Mammary epithelial cell (primary cell): ENCODE measurements at regions of chr9 and their contacts with region 1.

Region 1: GRCh38 chr9:37943329-37944265 is 39.7 kb upstream of the SLC25A51 start:
- DNase-seq: peak; percentile 83
- H3K4me3 ChIP-seq: no peak overlapping the region
- H3K27ac ChIP-seq: peak overlapping the region; percentile 3
- H3K4me1 ChIP-seq: peaks cover 52% of the 10 kb centered on the region
- H3K27me3 ChIP-seq: no peaks in the 10 kb centered on the region
- CTCF ChIP-seq: no peak

Region 2: DNA sequence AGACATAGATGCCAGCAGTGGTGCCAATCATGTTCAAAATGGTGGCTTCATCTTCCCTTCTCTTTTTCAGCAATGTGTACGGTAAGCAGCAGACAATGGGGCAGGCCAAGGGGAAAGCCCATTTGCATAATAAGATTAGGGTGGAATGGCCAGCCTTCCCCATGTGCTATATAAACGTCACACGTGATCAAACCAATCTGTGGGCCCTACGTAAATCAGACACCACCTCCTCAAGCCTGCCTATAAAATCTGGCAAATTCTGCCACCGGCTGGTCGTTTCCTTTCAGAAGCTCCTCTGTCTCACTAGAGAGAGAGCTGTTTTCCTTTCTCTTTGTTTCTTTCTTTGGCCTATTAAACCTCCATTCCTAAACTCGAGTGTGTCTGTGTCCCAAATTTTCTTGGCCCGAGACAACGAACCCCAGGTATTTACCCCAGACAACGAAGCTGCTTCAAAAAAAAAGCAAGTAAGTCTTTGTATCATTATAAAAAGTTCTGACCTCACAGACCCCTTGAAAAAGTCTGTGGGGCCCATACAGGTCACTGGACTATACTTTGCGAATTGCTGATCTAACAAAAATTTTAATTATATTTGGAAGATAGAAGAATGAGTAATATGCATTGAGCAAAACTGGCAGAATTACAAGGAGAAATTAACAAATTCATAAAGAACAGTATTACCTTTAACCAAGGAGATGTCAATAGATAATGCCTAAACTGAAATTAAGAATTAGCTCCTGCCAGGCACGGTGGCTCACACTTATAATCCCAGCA is 493.6 kb before region 1 on chr9:
- CTCF ChIA-PET with region 1: no interaction called
- dilution Hi-C with region 1: no loop called
- in situ Hi-C with region 1: no loop called
- intact Hi-C with region 1: no loop called
- DNase-seq: no peak
- H3K4me3 ChIP-seq: no peak overlapping the region
- H3K27ac ChIP-seq: no peak overlapping the region
- H3K4me1 ChIP-seq: peaks cover 21% of the 10 kb centered on the region
- H3K27me3 ChIP-seq: no peaks in the 10 kb centered on the region
- CTCF ChIP-seq: no peak

Region 3: DNA sequence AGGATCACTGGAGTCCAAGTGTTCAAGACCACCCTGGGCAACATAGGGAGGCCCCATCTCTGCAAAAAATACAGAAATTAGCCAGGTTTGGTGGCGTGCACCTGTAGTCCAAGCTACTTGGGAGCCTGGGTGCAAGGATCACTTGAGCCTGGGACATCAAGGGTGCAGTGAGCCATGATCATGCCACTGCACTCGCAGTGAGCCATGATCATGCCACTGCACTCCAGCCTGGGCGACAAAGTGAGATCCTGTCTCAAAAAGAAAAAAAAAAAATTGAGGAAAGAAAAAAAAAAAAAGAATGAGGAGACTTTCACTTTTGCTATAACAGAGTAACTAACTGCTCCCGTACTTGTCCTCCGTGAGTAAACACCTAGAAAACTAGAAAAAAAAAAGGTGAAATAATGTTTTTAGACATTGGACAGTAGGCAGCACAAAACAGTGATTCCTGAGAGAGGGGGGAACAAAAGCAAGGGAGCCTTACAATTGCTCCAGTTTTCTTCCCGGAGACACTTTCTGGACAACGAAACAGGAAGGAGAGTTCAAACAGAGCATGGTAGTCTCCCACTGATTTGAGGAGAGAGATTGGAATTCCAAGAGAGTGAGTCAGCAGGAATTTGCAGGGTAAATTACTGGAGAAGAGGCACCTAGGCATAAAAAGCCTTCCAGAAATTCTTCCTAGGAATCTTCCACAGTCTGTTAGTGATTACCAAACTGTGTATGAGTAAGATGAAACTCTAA is 471.5 kb before region 1 on chr9:
- CTCF ChIA-PET with region 1: no interaction called
- dilution Hi-C with region 1: loop called (anchors 10 kb)
- in situ Hi-C with region 1: no loop called
- intact Hi-C with region 1: no loop called
- DNase-seq: peak; percentile 87
- H3K4me3 ChIP-seq: peak overlapping the region; percentile 35 to 68 (median 55)
- H3K27ac ChIP-seq: peak overlapping the region; percentile 81
- H3K4me1 ChIP-seq: peaks cover 16% of the 10 kb centered on the region
- H3K27me3 ChIP-seq: no peaks in the 10 kb centered on the region
- CTCF ChIP-seq: no peak

Region 4: DNA sequence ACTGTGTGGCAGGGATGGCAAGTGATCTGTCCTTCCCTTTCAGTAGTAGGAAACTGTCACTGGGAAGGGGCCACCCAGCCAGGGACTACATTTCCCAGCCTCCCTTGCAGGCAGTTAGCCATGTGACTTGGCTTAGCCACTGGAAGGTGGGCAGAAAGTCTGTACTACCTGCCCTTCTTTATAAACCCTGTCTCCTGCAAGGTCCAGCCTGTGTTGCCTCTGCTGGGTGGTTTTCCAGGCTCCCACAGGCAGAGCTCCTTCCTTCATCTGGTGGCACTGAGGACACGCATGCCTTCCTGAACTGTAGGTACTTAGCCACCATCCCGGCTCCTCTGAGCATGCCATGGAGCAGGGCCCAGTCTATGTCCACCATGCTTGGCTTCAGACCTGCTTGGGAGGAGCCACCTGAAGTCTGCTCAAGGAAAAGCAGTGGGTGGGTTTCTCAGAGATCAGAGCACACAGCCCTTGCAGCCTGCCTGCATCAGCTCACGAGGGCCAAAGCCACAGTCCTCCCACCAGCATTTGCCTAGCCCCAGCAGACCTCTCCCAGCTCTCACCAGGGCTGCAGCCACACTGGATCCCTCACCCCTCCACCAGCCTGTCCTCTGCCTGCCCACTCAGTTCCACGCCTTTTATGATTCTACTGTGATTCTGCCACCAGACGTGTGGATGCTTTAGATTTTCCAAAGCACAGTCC is 23.0 kb before region 1 on chr9:
- CTCF ChIA-PET with region 1: interaction called, 11 read pairs
- dilution Hi-C with region 1: no loop called
- in situ Hi-C with region 1: no loop called
- intact Hi-C with region 1: no loop called
- DNase-seq: no peak
- H3K4me3 ChIP-seq: no peak overlapping the region
- H3K27ac ChIP-seq: no peak overlapping the region
- H3K4me1 ChIP-seq: peaks cover 29% of the 10 kb centered on the region
- H3K27me3 ChIP-seq: no peaks in the 10 kb centered on the region
- CTCF ChIP-seq: no peak

Region 5: GRCh38 chr9:38010918-38011704 is 67.5 kb after region 1 on chr9:
- CTCF ChIA-PET with region 1: no interaction called
- dilution Hi-C with region 1: loop called (anchors 5 kb)
- in situ Hi-C with region 1: no loop called
- intact Hi-C with region 1: loop called (anchors 5 kb)
- DNase-seq: no peak
- H3K4me3 ChIP-seq: no peak overlapping the region
- H3K27ac ChIP-seq: no peak overlapping the region
- H3K4me1 ChIP-seq: peaks cover 48% of the 10 kb centered on the region
- H3K27me3 ChIP-seq: no peaks in the 10 kb centered on the region
- CTCF ChIP-seq: no peak